AG04449 (cell line): ENCODE measurements at regions of chr16 and their contacts with region 1.

Region 1: DNA sequence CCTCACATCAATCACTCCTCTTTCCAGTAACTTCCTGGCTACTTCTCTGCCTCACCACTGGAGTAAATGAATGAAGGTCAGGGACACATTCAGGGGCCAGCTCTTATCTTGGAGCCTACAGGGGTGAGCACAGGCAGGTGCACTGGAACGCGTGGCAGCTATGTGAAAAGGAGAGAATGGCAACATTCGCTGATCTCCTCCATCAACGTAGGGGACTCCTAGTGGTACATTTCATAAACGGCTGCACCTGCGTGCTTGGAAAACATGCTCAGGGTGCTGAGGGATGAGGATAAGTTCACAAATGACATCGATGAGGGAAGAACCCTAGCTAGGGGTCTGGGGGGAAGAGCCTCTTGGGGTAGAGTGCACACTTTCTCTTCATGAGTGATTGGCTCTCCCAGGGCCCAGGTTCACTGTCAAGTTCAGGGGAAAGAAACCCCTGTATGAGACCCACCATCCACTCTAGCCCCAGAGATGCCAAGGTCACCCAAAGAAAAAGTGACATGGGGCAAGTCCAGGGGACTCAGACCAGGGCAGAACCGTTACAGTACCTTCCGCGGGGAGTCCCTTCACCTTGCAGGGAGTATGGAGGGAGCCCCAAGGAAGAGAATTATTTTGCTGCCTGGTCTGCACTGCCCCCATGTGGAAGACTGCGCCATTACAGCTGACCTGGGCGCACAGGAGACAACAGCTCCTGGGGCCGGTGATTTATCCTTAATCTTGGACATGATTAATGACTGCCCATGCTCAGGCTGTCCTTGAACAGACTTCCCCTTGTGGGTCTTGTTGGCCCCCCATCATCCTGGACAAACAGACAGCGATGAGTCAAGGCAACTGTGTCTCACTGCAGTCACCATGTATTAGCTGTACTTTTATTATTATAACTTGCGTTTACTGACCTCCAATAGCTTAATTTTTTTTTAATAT is 30.1 kb downstream of the VAC14 start:
- DNase-seq: no peak
- H3K4me3 ChIP-seq: no peak overlapping the region
- CTCF ChIP-seq: peak; percentile 91

Region 2: GRCh38 chr16:70529051-70529777 is 241.7 kb before region 1 on chr16:
- CTCF ChIA-PET with region 1: interaction called, 17 read pairs
- POLR2A ChIA-PET with region 1: no interaction called
- DNase-seq: no peak
- H3K4me3 ChIP-seq: no peak overlapping the region
- CTCF ChIP-seq: peak; percentile 35

Region 3: GRCh38 chr16:70685938-70686375 is 84.9 kb before region 1 on chr16 and contains the start of gene MTSS2:
- CTCF ChIA-PET with region 1: interaction called, 320 read pairs
- POLR2A ChIA-PET with region 1: interaction called, 3 read pairs
- DNase-seq: no peak
- H3K4me3 ChIP-seq: peak within 1 kb of the TSS; percentile 86
- CTCF ChIP-seq: no peak

Region 4: GRCh38 chr16:70703041-70703834 is 67.7 kb before region 1 on chr16:
- CTCF ChIA-PET with region 1: interaction called, 25 read pairs
- POLR2A ChIA-PET with region 1: interaction called, 3 read pairs
- DNase-seq: peak; percentile 75
- H3K4me3 ChIP-seq: no peak overlapping the region
- CTCF ChIP-seq: peak; percentile 70

Region 5: GRCh38 chr16:70737377-70738082 is 33.4 kb before region 1 on chr16:
- CTCF ChIA-PET with region 1: interaction called, 10 read pairs
- POLR2A ChIA-PET with region 1: interaction called, 3 read pairs
- DNase-seq: peak; percentile 63
- H3K4me3 ChIP-seq: no peak overlapping the region
- CTCF ChIP-seq: no peak

Region 6: DNA sequence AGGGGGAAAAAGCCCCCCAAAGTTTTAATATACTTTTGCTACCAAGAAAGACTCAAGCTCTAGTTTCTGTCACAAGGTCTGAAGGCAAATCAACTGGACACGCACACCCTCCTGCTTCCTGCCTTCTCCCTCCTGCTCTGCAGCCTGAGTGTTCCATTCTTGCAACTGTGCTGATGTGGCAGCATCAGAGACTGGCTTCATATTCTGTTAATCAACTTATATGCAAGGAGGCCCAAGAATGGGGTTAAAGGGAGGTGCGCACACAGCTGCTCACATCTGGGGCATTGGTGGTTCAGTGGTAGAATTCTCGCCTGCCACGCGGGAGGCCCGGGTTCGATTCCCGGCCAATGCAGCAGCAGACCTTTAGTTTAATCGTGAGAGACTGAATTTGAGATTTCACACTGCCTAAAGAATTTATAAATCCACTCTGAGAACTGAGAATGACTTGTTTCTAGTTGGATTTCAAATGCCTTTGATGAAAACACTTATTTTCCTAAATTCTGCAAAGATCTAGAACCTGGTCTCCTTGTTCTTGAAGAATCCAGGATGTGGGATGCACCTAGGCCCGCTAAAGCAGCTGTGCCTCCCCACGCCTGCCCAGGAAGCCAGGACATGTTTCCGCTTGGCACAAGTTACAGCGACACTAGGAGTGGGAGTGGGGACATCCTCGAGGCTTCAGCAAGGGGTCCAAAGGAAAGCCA is 18.5 kb after region 1 on chr16:
- CTCF ChIA-PET with region 1: interaction called, 10 read pairs
- POLR2A ChIA-PET with region 1: no interaction called
- DNase-seq: no peak
- H3K4me3 ChIP-seq: no peak overlapping the region
- CTCF ChIP-seq: no peak

Region 7: DNA sequence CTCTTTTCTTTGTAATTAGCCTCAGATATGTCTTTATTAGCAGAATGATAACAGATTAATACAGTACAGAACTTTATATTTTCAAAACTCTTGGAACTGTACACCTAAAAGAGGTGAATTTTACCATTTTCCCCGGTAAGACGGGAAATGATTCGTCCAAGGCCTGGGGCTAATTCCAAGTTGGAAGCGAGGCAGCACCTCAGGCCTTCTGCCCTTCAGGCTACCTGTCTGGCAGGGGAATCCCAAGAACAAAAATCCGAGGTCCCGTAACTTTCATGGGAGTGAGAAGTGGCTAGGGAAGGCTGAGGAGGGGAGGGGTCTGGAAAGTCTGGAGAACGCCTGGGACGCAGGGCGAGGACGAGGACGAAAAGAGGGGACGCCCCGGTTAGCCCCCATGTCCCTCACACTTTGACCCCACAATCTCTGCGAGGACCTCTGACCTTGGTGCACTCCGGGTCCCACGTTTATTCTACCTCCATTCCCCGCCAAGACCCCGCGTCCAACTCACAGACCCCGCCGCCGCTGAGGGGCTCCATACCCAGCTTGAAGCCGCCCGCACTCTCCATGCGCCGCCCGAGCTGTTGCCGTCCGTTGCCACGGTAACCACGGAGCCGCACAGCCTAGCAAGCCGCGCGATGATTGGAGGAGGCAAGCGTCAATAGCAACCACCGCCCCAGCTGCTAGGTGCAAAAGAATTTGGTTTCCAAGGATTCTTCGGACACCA is 459.4 kb after region 1 on chr16 and contains the start of gene HYDIN:
- CTCF ChIA-PET with region 1: no interaction called
- POLR2A ChIA-PET with region 1: no interaction called
- DNase-seq: no peak
- H3K4me3 ChIP-seq: peak within 1 kb of the TSS; percentile 18; the same call in 1 of the 2 replicates
- CTCF ChIP-seq: no peak